ENCODE measurements at regions of chr7 and their contacts with region 1.

Region 1: GRCh38 chr7:80027611-80028173 is 106.9 kb upstream of the GNAI1 start:
- DNase-seq: no peak
- H3K4me3 ChIP-seq: no peak overlapping the region
- H3K27ac ChIP-seq: no peak overlapping the region
- H3K4me1 ChIP-seq: no peaks in the 10 kb centered on the region
- H3K27me3 ChIP-seq: no peaks in the 10 kb centered on the region
- CTCF ChIP-seq: no peak

Region 2: GRCh38 chr7:79298145-79298760 is 729.4 kb before region 1 on chr7:
- intact Hi-C with region 1: loop called (anchors 10 kb)
- DNase-seq: peak; percentile 26
- H3K4me3 ChIP-seq: no peak overlapping the region
- H3K27ac ChIP-seq: no peak overlapping the region
- H3K4me1 ChIP-seq: no peaks in the 10 kb centered on the region
- H3K27me3 ChIP-seq: no peaks in the 10 kb centered on the region
- CTCF ChIP-seq: peak; percentile 64

Measured in colonic mucosa (tissue), 4 donors.